Aorta (tissue), 5 donors: ENCODE measurements at regions of chr4 and their contacts with region 1.

Region 1: GRCh38 chr4:157992038-157992705 is 180.7 kb downstream of the GASK1B start:
- DNase-seq: no peak
- ATAC-seq: peak; percentile 93
- H3K4me3 ChIP-seq: peak overlapping the region; percentile 31 to 89
- H3K27ac ChIP-seq: no peak overlapping the region
- H3K4me1 ChIP-seq: no peaks in the 10 kb centered on the region
- H3K27me3 ChIP-seq: no peaks in the 10 kb centered on the region

Region 2: DNA sequence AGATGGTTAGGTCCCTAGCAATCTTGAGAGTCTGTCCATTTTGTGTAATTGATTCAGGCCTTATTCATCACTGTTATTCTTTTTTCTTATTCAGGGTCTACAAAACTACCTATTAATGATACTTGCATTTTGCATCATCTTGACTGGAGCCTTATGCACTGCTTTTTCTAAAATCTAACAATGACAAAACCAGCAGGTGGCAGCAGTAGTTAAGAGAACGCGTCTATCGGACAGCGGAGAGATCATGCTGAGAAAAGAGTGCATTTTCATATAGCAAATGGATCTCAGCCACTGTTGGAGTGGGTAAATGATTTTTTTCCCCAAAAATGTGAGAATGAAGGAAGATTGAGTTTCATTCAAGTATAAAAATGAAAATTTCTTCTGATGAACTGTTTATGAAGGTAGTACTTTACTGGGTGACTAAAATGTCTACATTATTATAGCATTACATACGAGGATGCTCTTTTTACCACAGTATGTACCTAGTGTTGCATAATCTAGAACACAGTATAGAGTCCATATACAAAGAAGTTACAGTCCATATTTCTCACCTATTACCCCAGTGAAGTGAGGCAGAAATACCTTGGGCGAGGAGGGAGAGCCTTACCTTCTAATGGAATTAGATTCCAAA is 261.3 kb after region 1 on chr4:
- intact Hi-C with region 1: loop called (anchors 2 kb)
- DNase-seq: peak in 1 of 2 donors; percentile 47
- ATAC-seq: peak; percentile 78
- H3K4me3 ChIP-seq: no peak overlapping the region
- H3K27ac ChIP-seq: no peak overlapping the region
- H3K4me1 ChIP-seq: no peaks in the 10 kb centered on the region
- H3K27me3 ChIP-seq: no peaks in the 10 kb centered on the region

Region 3: GRCh38 chr4:158624889-158625478 is 632.8 kb after region 1 on chr4:
- intact Hi-C with region 1: loop called in 1 of 2 experiments (anchors 10 kb)
- DNase-seq: no peak
- ATAC-seq: peak; percentile 85
- H3K4me3 ChIP-seq: peak overlapping the region in 1 of 2 donors; percentile 34
- H3K27ac ChIP-seq: no peak overlapping the region
- H3K4me1 ChIP-seq: no peaks in the 10 kb centered on the region
- H3K27me3 ChIP-seq: no peaks in the 10 kb centered on the region